Cardiac septum (tissue), 1 donor: ENCODE measurements at regions of chr1 and their contacts with region 1.

Region 1: GRCh38 chr1:39196244-39197215 is 8.0 kb upstream of the MACF1 start:
- DNase-seq: no peak

Region 2: DNA sequence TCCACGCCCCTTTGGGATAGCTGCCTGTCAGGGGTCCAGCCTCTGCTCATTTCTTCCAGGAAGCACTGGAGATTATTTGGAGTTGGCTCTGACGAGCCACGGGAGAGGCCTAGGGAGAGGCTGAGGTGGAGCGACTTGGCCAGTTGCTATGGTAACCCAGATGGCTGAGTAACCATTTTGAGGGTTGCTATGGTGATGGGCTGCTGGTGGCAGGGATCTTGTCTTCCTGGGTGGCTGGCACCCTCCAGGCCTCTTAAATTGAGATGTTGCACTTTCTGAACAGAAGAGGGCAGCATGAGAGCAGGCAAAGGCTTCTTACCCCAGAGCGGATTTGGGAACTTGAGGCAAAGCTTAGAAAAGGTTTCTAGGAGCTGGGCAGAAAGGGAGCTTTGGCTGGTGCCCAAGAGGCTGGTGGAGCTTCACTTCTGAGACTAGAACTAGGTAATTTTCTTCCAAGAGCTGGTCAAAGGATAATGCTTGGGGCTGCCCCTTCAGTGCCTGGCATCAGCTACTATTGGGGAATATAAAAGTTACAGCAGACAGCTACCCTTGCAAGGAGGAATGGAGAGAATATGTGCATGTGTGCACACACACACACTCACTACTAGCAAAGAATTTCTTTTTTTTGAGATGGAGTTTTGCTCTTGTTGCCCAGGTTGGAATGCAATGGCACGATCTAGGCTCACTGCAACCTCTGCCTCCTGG is 97.8 kb before region 1 on chr1:
- intact Hi-C with region 1: loop called (anchors 1 kb)
- DNase-seq: no peak

Region 3: DNA sequence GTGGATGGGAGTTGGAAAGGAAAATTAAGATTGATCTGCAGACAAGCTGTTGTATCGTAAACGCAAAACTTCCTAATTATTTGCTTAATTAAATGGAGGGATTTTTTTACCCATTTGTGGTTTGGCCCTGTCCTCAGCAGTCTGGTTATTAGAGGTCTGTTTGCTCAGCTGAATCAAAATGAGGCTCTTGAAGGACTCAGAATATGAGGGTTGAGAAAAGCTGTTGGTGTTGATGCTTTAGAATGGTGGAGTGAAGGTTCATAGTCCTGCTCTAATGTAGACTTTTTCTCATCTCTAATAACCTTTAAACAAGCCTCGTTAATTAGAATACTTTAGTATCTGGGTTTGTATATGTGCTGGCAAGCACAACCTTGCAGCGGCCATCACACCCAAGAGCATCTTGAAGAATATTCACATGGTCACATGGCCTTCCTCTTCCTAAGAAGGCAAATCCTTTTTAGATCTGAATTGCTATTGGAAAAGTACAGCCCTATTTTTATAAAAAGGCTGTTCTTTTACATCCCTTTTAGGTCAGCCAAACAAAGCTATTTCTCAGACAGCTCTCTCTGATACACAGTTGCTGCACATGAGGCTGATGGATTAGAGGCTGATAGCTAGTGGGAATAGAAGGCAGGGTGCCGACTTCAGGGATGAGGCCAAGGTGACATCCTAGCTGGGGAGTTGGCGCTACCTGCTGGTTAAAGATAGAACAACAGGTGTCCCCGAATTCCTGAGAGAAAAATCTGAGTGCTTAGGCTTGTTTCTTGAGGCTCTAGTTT is 61.8 kb after region 1 on chr1:
- intact Hi-C with region 1: loop called (anchors 2 kb)
- DNase-seq: no peak